ENCODE measurements at regions of chr9 and their contacts with region 1.

Region 1: GRCh38 chr9:5886114-5886939 is 4.4 kb upstream of the MLANA start:
- DNase-seq: peak; percentile 79 to 94
- H3K4me3 ChIP-seq: no peak overlapping the region
- H3K27ac ChIP-seq: no peak overlapping the region
- H3K4me1 ChIP-seq: no peaks in the 10 kb centered on the region
- H3K27me3 ChIP-seq: no peaks in the 10 kb centered on the region
- CTCF ChIP-seq: peak; percentile 95 to 98 (median 98)
- EP300 ChIP-seq: no peak
- POLR2A ChIP-seq: no peak
- RAD21 ChIP-seq: peak; percentile 96 to 97

Region 2: DNA sequence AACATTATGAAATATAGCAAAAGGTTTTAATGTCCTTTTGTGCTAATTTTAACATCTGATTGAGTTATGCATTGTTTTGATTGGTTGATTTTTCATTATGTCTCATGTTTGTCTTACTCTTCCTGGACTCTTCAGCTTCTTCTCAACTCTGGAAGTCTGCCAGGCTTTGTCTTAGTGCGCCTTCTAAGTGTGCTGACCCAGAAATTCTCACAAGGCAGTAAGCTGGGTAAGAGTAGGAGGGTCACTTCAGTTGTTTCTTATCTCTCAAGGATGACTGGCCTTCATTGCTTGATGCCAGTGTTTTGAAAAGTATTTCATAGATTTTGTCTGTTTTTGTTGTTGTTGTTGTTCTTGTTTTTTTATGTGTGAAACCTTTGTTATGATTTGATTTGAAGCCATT is 198.2 kb before region 1 on chr9:
- CTCF ChIA-PET with region 1: no interaction called
- POLR2A ChIA-PET with region 1: no interaction called
- DNase-seq: no peak
- H3K4me3 ChIP-seq: no peak overlapping the region
- H3K27ac ChIP-seq: no peak overlapping the region
- H3K4me1 ChIP-seq: no peaks in the 10 kb centered on the region
- H3K27me3 ChIP-seq: no peaks in the 10 kb centered on the region
- CTCF ChIP-seq: no peak
- EP300 ChIP-seq: no peak
- POLR2A ChIP-seq: no peak
- RAD21 ChIP-seq: no peak

Region 3: DNA sequence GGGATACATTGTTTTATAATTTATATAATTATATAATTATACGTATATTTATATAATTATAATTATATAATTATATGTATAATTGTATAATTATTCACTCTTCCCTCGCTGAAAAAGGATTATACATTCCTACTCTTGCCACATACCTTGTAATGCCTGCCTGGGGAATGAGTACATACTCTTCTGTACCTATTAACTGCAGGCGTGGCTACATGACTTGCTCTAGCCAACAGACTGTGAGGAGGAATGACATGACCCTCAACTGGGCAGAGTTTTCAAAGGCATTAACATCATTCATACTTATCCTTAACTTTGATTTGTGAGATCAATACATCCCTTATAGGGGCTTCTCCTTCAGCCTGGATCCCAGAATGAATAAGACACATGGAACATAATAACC is 72.5 kb before region 1 on chr9:
- CTCF ChIA-PET with region 1: no interaction called
- POLR2A ChIA-PET with region 1: no interaction called
- DNase-seq: no peak
- H3K4me3 ChIP-seq: no peak overlapping the region
- H3K27ac ChIP-seq: no peak overlapping the region
- H3K4me1 ChIP-seq: no peaks in the 10 kb centered on the region
- H3K27me3 ChIP-seq: no peaks in the 10 kb centered on the region
- CTCF ChIP-seq: no peak
- EP300 ChIP-seq: no peak
- POLR2A ChIP-seq: no peak
- RAD21 ChIP-seq: no peak

Region 4: DNA sequence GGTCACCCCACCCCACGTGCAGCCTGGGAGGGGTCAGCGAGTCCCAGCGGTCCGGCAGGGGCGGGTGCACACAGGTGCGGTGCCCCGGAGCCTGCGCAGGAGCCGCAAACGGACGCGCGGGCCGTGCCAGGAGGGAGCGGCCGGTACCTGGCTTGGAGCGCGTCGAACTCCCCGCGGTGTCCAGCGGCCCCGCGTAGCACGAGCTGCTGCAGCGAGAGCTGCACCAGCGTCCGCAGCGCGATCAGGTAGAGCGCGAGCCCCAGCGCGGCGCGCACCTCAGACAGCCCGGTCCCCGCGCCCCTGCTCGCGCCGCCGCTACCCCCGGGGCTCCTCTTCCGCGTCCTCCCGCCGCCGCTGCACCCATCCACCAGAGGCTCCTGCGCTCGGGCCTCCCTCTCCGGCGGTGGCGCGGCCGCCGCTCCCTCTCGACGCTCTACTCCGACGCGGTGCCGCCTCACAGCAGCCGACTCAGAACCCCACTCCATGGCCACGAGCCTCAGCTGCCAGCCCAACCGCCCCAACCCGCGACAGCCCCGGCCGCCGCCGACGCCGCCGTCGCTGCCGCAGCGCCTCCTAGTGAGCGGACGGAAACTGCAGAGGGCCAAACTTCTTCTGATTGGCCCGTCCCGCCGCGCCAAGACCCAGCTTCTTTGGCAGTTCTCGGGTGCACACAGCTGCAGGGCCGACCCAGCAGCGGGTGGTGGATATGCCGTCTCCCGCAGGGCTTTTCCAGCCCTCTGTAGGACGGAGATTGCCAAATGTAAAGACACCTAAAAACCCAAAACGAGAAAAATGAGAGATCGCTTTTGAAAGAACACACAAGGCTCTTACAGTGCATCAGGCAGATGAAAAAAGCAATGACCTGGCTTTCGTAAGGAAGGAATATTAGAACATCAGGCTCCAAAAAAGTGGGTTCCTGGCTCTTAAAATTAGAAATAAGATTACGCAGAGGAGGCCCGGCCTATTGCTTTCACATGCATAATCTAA is 53.5 kb before region 1 on chr9 and contains the start of gene ERMP1:
- CTCF ChIA-PET with region 1: interaction called, 12 read pairs
- POLR2A ChIA-PET with region 1: no interaction called
- DNase-seq: peak; percentile 51 to 96
- H3K4me3 ChIP-seq: peak within 1 kb of the TSS; percentile 49 to 79 (median 74)
- H3K27ac ChIP-seq: no peak within 1 kb of the TSS; the same call in 1 of the 2 replicates
- H3K4me1 ChIP-seq: peaks cover 0 to 9% (median 4%) of the 10 kb centered on the region in 4 experiments; a peak in 4 of 7 replicates
- H3K27me3 ChIP-seq: no peaks in the 10 kb centered on the region; a peak in 1 of 7 replicates
- CTCF ChIP-seq: peak; percentile 74 to 86 (median 85)
- EP300 ChIP-seq: peak in 1 of 2 experiments; percentile 95; a peak in 2 of 3 replicates
- POLR2A ChIP-seq: peak; percentile 62 to 65
- RAD21 ChIP-seq: peak; percentile 40 to 52; a peak in 3 of 4 replicates
- total RNA-seq, gene ERMP1: 16.5 and 16.7 TPM in 2 replicates

Region 5: GRCh38 chr9:5864458-5864857 is 21.9 kb before region 1 on chr9:
- CTCF ChIA-PET with region 1: interaction called, 38 read pairs
- POLR2A ChIA-PET with region 1: no interaction called
- DNase-seq: no peak
- H3K4me3 ChIP-seq: no peak overlapping the region
- H3K27ac ChIP-seq: no peak overlapping the region
- H3K4me1 ChIP-seq: peaks cover 0 to 2% (median 1%) of the 10 kb centered on the region in 4 experiments; a peak in 4 of 7 replicates
- H3K27me3 ChIP-seq: no peaks in the 10 kb centered on the region
- CTCF ChIP-seq: no peak
- EP300 ChIP-seq: no peak
- POLR2A ChIP-seq: no peak
- RAD21 ChIP-seq: no peak

Region 6: DNA sequence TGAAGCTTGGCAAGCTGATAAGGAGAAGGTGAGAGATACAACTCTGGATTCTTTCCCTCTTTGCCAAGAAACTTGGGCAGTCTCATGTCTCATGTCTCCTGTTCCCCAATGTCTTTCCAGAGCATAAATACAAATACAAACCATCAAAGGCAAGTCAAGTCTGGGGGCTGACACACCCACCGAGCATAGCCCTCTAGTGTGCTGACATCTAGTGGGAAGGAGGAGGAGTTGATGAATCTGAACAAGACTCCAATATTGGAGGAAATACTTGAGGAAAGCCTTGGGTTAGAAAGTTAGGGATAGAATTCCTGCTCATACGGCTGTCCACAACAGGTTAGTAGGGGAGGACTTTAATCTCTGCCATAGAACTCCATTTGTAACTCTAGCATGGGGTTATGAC is 13.0 kb after region 1 on chr9:
- CTCF ChIA-PET with region 1: interaction called, 120 read pairs
- POLR2A ChIA-PET with region 1: interaction called, 3 read pairs
- DNase-seq: no peak
- H3K4me3 ChIP-seq: no peak overlapping the region
- H3K27ac ChIP-seq: no peak overlapping the region
- H3K4me1 ChIP-seq: no peaks in the 10 kb centered on the region
- H3K27me3 ChIP-seq: no peaks in the 10 kb centered on the region
- CTCF ChIP-seq: peak; percentile 30 to 52 (median 50)
- EP300 ChIP-seq: no peak
- POLR2A ChIP-seq: no peak
- RAD21 ChIP-seq: peak; percentile 51 to 65

Region 7: GRCh38 chr9:5988265-5988664 is 101.9 kb after region 1 on chr9:
- CTCF ChIA-PET with region 1: no interaction called
- POLR2A ChIA-PET with region 1: no interaction called
- DNase-seq: no peak
- H3K4me3 ChIP-seq: no peak overlapping the region
- H3K27ac ChIP-seq: no peak overlapping the region
- H3K4me1 ChIP-seq: no peaks in the 10 kb centered on the region
- H3K27me3 ChIP-seq: no peaks in the 10 kb centered on the region
- CTCF ChIP-seq: no peak
- EP300 ChIP-seq: no peak
- POLR2A ChIP-seq: no peak
- RAD21 ChIP-seq: no peak

Region 8: GRCh38 chr9:6029604-6030274 is 143.4 kb after region 1 on chr9:
- CTCF ChIA-PET with region 1: interaction called, 10 read pairs
- POLR2A ChIA-PET with region 1: no interaction called
- DNase-seq: no peak
- H3K4me3 ChIP-seq: no peak overlapping the region
- H3K27ac ChIP-seq: no peak overlapping the region
- H3K4me1 ChIP-seq: no peaks in the 10 kb centered on the region; a peak in 1 of 7 replicates
- H3K27me3 ChIP-seq: no peaks in the 10 kb centered on the region
- CTCF ChIP-seq: no peak
- EP300 ChIP-seq: no peak
- POLR2A ChIP-seq: no peak
- RAD21 ChIP-seq: no peak

Region 9: GRCh38 chr9:6055213-6055612 is 168.9 kb after region 1 on chr9:
- CTCF ChIA-PET with region 1: interaction called, 51 read pairs
- POLR2A ChIA-PET with region 1: no interaction called
- DNase-seq: no peak
- H3K4me3 ChIP-seq: no peak overlapping the region
- H3K27ac ChIP-seq: no peak overlapping the region
- H3K4me1 ChIP-seq: 0 out of 7 replicates have a peak, but pooled peaks cover 0 to 4% (median 0%) of the 10 kb centered on the region in 4 experiments
- H3K27me3 ChIP-seq: no peaks in the 10 kb centered on the region
- CTCF ChIP-seq: peak in 2 of 3 experiments; percentile 56 to 59; a peak in 3 of 4 replicates
- EP300 ChIP-seq: no peak
- POLR2A ChIP-seq: no peak
- RAD21 ChIP-seq: peak; percentile 92 to 95

Region 10: DNA sequence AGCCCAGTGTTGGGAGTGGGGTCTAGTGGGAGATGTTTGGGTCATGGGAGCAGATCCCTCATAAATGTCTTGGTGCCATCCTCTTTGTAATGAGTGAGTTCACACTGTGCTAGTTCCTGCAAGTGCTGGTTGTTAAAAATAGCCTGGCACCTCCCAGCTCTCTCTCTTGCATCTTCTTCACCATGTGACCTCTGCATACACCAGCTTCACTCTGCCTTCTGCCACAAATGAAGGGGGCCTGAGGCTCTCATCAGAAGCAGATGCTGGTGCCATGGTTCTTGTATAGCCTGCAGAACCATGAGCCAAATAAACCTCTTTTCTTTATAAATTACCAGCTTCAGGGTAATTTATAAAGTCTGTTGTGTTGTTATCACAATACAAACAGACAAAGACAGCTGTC is 204.0 kb after region 1 on chr9:
- CTCF ChIA-PET with region 1: no interaction called
- POLR2A ChIA-PET with region 1: no interaction called
- DNase-seq: no peak
- H3K4me3 ChIP-seq: no peak overlapping the region
- H3K27ac ChIP-seq: no peak overlapping the region
- H3K4me1 ChIP-seq: no peaks in the 10 kb centered on the region
- H3K27me3 ChIP-seq: no peaks in the 10 kb centered on the region
- CTCF ChIP-seq: no peak
- EP300 ChIP-seq: no peak
- POLR2A ChIP-seq: no peak
- RAD21 ChIP-seq: no peak